ENCODE measurements at regions of chr14 and their contacts with region 1.

Region 1: GRCh38 chr14:104794641-104795467 is 694 bp downstream of the AKT1 start:
- DNase-seq: no peak
- ATAC-seq: peak; percentile 3 to 10
- H3K4me3 ChIP-seq: peak overlapping the region; percentile 89
- H3K27ac ChIP-seq: peak overlapping the region; percentile 4
- H3K4me1 ChIP-seq: peaks cover 14% of the 10 kb centered on the region
- H3K27me3 ChIP-seq: no peaks in the 10 kb centered on the region

Region 2: DNA sequence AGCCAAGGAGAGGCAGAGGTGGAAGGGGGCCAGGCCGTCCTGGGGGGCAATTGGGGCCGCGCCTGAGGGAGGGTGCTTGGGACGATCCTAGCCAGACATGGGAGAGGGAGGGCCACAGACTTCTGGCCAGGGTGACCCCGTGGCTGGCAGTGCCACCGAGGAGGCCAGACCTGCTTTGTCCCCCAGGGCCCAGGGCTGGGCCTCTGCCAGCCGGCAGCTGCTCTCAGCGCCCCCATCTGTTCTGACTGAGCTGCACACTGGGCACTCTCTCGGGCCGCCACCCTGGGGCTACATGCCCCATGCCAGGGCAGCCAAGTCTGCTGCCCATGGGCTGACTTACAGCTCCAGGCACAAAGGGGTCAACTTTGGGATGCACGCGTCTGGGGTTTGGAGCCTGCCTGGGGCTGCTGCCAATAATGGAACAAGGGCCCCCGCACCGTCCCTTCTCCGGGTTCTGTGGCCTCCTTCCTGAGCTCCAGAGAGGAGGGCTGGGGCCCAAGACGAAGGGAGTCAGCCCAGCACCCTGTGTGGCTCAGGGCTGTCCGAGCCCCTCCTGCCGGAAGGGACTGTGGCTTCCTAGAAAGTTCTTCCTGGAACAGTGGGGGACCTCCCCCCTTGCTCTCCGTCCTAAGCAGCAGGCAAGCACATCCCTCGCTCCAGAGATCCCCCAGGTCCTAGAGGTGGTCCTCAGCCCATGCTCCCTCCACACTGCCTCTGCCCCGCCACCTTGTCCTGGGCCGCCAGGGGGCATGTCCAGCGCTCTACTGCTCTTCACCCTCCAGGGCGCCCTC is 69.7 kb before region 1 on chr14:
- intact Hi-C with region 1: no loop called
- DNase-seq: peak; percentile 66 to 87 (median 84)
- ATAC-seq: peak; percentile 22 to 39
- H3K4me3 ChIP-seq: peak overlapping the region; percentile 66
- H3K27ac ChIP-seq: peak overlapping the region; percentile 89
- H3K4me1 ChIP-seq: no peaks in the 10 kb centered on the region
- H3K27me3 ChIP-seq: no peaks in the 10 kb centered on the region

Region 3: DNA sequence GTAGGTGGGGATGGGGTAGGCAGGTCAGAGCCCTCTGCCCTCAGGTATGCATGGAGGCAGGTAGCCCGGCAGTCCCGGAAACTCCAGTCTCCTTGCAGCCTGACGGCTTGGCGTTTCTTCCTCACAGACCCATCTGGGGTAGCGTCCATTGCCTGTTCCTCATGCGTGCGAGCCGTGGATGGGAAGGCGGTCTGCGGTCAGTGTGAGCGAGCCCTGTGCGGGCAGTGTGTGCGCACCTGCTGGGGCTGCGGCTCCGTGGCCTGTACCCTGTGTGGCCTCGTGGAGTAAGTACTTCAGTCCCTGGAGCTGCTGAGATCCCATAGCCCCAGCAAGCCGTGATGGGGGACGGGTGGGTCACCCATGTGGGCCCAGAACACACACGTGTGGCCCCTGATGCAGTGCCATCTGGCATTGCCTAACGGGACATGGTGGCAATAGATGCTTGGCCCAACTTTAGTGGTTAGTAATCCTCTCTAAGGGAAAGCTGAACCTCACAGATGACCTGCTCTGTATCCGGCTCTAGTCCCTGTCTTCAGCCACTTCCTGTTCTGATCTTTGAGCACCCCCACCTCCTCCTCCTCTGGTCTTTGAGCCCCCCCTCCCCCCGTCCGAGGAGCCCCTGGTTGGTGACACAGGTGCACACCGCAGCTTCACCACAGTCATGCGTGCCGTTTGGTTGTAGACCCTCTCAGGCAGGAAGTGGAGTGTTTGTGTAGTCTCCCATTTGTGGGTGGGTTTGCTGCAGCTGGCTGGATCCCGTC is 38.2 kb before region 1 on chr14:
- intact Hi-C with region 1: loop called in 1 of 4 experiments (anchors 5 kb)
- DNase-seq: peak in 2 of 3 donors; percentile 49 to 56
- ATAC-seq: no peak
- H3K4me3 ChIP-seq: no peak overlapping the region
- H3K27ac ChIP-seq: no peak overlapping the region
- H3K4me1 ChIP-seq: peaks cover 2% of the 10 kb centered on the region
- H3K27me3 ChIP-seq: no peaks in the 10 kb centered on the region

Region 4: GRCh38 chr14:104895786-104896661 is 101.2 kb after region 1 on chr14:
- intact Hi-C with region 1: no loop called
- DNase-seq: peak; percentile 42 to 75 (median 72)
- ATAC-seq: peak; percentile 7 to 21
- H3K4me3 ChIP-seq: no peak overlapping the region
- H3K27ac ChIP-seq: no peak overlapping the region
- H3K4me1 ChIP-seq: no peaks in the 10 kb centered on the region
- H3K27me3 ChIP-seq: no peaks in the 10 kb centered on the region

Measured in right cardiac atrium (tissue), 5 donors.